ENCODE measurements at regions of chr7 and their contacts with region 1.

Region 1: GRCh38 chr7:144391823-144392255 is 11.7 kb downstream of the NOBOX start:
- DNase-seq: peak; percentile 7
- H3K4me3 Mint-ChIP-seq: no peak overlapping the region
- H3K27ac Mint-ChIP-seq: no peak overlapping the region
- H3K4me1 Mint-ChIP-seq: peaks cover 4% of the 10 kb centered on the region
- H3K27me3 Mint-ChIP-seq: peaks cover 2% of the 10 kb centered on the region

Region 2: GRCh38 chr7:144127703-144128334 is 264.0 kb before region 1 on chr7:
- intact Hi-C with region 1: loop called (anchors 2 kb)
- DNase-seq: peak; percentile 72
- H3K4me3 Mint-ChIP-seq: no peak overlapping the region
- H3K27ac Mint-ChIP-seq: no peak overlapping the region
- H3K4me1 Mint-ChIP-seq: no peaks in the 10 kb centered on the region
- H3K27me3 Mint-ChIP-seq: no peaks in the 10 kb centered on the region

Region 3: GRCh38 chr7:144437370-144438191 is 45.7 kb after region 1 on chr7:
- intact Hi-C with region 1: loop called (anchors 1 kb)
- DNase-seq: peak; percentile 13
- H3K4me3 Mint-ChIP-seq: no peak overlapping the region
- H3K27ac Mint-ChIP-seq: no peak overlapping the region
- H3K4me1 Mint-ChIP-seq: no peaks in the 10 kb centered on the region
- H3K27me3 Mint-ChIP-seq: peaks cover 2% of the 10 kb centered on the region

Measured in activated T-helper 1 cell treated with anti-CD3 and anti-CD28 coated beads, Interleukin-12 subunit alpha, Interleukin-12 subunit beta, Interleukin-2, Interleukin-4 antibody, amounts not matched to agents 30 ng/mL and 10 ng/mL and 1 ng/mL, durations not matched to agents 14 hours and 24 hours and 36 hours (primary cell).